HEK293 (cell line): ENCODE measurements at regions of chr3 and their contacts with region 1.

Region 1: DNA sequence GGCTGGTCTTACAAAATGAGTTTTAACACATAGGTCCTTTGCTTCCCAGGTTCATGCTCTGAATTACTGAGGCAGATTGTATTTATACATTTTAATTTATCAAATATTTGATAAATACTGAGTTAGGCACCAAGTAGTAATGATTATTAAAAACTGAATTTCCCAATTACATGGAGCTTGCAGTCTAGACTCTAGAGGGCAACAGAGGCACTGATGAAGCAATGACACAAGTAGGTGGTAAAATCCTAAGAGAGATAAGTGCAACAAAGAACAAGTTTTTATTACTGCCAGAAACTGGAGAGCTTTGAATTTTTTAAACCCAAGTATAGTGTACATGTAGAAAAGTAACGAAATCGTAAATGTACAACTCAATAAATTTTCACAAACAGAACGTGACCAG is 406.2 kb upstream of the RARB start:
- H3K4me3 ChIP-seq: no peak overlapping the region
- H3K27ac ChIP-seq: no peak overlapping the region
- H3K4me1 ChIP-seq: no peaks in the 10 kb centered on the region
- CTCF ChIP-seq: no peak

Region 2: DNA sequence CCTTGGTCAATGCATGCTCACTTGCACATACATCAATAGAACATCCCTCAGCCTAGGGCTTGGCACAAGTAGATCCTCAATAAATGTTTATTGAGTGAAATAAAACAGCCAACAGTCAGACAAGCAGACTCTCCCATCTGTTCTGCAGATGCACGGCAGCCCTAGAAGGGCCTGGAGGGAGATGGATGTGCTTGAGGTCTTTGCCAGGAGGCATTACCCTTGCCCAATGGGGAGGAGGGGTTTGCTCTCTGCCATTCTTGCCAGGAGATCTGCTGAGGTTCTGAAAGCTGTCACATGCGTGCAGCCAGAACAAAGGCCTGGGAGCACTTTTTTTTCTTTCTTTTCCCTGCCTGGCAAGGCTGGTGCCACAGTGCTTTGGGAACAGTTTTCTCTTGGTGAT is 177.9 kb before region 1 on chr3:
- CTCF ChIA-PET with region 1: no interaction called
- POLR2A ChIA-PET with region 1: no interaction called
- H3K4me3 ChIP-seq: no peak overlapping the region
- H3K27ac ChIP-seq: no peak overlapping the region
- H3K4me1 ChIP-seq: no peaks in the 10 kb centered on the region
- CTCF ChIP-seq: no peak

Region 3: DNA sequence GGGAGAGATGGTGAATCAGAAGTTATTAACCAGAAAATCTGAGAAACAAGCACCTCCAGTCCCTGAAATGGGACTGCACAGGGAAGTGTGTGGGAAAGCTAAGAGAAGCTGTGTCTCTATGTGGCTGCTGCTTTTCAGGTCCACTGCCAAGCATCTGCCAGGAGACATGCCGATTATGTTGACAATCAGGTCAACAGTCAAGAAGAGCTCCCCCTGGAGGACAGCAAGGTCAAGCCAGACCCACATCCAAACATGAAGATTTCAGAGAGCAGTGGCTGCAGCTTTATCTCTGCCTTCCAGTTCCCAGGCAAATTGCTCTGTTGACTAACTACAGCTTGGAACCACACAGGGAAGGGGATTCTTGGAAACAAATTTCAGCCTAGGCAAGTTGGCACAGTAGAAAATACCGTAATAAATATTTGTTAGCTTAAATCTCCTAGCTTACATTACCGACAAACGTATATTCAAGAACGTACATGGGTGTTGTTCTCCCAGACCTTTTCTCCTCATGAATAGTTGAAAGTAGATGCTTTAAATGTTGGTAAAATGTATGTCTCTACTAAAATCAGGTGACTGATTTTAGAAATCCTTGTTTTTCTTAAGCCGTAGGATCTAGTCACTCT is 11.7 kb after region 1 on chr3:
- CTCF ChIA-PET with region 1: interaction called, 17 read pairs
- POLR2A ChIA-PET with region 1: no interaction called
- H3K4me3 ChIP-seq: no peak overlapping the region
- H3K27ac ChIP-seq: no peak overlapping the region
- H3K4me1 ChIP-seq: peaks cover 5% of the 10 kb centered on the region
- CTCF ChIP-seq: peak; percentile 62; the same call in 1 of the 2 replicates